ENCODE measurements at regions of chr1 and their contacts with region 1.

Region 1: GRCh38 chr1:115052454-115053083 is 22.9 kb downstream of the TSHB start:
- DNase-seq: peak; percentile 44 to 67 (median 61)
- H3K4me3 ChIP-seq: no peak overlapping the region
- H3K4me3 Mint-ChIP-seq: no peak overlapping the region
- H3K27ac ChIP-seq: no peak overlapping the region
- H3K27ac Mint-ChIP-seq: no peak overlapping the region
- H3K4me1 ChIP-seq: peaks cover 5% of the 10 kb centered on the region
- H3K4me1 Mint-ChIP-seq: peaks cover 0 to 5% (median 2%) of the 10 kb centered on the region in 4 donors
- H3K27me3 ChIP-seq: no peaks in the 10 kb centered on the region
- H3K27me3 Mint-ChIP-seq: no peaks in the 10 kb centered on the region

Region 2: GRCh38 chr1:115041654-115042053 is 10.9 kb before region 1 on chr1:
- CTCF ChIA-PET with region 1: interaction called, 49 read pairs
- POLR2A ChIA-PET with region 1: no interaction called
- intact Hi-C with region 1: no loop called
- DNase-seq: no peak
- H3K4me3 ChIP-seq: no peak overlapping the region
- H3K4me3 Mint-ChIP-seq: no peak overlapping the region
- H3K27ac ChIP-seq: no peak overlapping the region
- H3K27ac Mint-ChIP-seq: no peak overlapping the region
- H3K4me1 ChIP-seq: no peaks in the 10 kb centered on the region
- H3K4me1 Mint-ChIP-seq: no peaks in the 10 kb centered on the region
- H3K27me3 ChIP-seq: no peaks in the 10 kb centered on the region
- H3K27me3 Mint-ChIP-seq: no peaks in the 10 kb centered on the region

Region 3: GRCh38 chr1:115068826-115069572 is 16.4 kb after region 1 on chr1:
- CTCF ChIA-PET with region 1: interaction called, 14 read pairs
- POLR2A ChIA-PET with region 1: no interaction called
- intact Hi-C with region 1: no loop called
- DNase-seq: no peak
- H3K4me3 ChIP-seq: no peak overlapping the region
- H3K4me3 Mint-ChIP-seq: no peak overlapping the region
- H3K27ac ChIP-seq: no peak overlapping the region
- H3K27ac Mint-ChIP-seq: peak overlapping the region in 6 of 7 donors; percentile 13 to 70 (median 45)
- H3K4me1 ChIP-seq: peaks cover 45% of the 10 kb centered on the region
- H3K4me1 Mint-ChIP-seq: peaks cover 42 to 69% (median 50%) of the 10 kb centered on the region in 4 donors
- H3K27me3 ChIP-seq: no peaks in the 10 kb centered on the region
- H3K27me3 Mint-ChIP-seq: no peaks in the 10 kb centered on the region

Region 4: GRCh38 chr1:115089420-115090185 is 37.0 kb after region 1 on chr1 and contains the start of gene TSPAN2:
- CTCF ChIA-PET with region 1: interaction called, 12 read pairs
- POLR2A ChIA-PET with region 1: interaction called, 3 read pairs
- intact Hi-C with region 1: no loop called
- DNase-seq: peak; percentile 61 to 69 (median 64)
- H3K4me3 ChIP-seq: peak within 1 kb of the TSS; percentile 36 to 63
- H3K4me3 Mint-ChIP-seq: peak within 1 kb of the TSS; percentile 84 to 91 (median 87)
- H3K27ac ChIP-seq: peak within 1 kb of the TSS; percentile 61
- H3K27ac Mint-ChIP-seq: peak within 1 kb of the TSS; percentile 74 to 93 (median 90)
- H3K4me1 ChIP-seq: peaks cover 35% of the 10 kb centered on the region
- H3K4me1 Mint-ChIP-seq: peaks cover 35 to 60% (median 47%) of the 10 kb centered on the region in 4 donors
- H3K27me3 ChIP-seq: no peaks in the 10 kb centered on the region
- H3K27me3 Mint-ChIP-seq: no peaks in the 10 kb centered on the region
- total RNA-seq, gene TSPAN2: 1.3 to 3.5 TPM

Region 5: DNA sequence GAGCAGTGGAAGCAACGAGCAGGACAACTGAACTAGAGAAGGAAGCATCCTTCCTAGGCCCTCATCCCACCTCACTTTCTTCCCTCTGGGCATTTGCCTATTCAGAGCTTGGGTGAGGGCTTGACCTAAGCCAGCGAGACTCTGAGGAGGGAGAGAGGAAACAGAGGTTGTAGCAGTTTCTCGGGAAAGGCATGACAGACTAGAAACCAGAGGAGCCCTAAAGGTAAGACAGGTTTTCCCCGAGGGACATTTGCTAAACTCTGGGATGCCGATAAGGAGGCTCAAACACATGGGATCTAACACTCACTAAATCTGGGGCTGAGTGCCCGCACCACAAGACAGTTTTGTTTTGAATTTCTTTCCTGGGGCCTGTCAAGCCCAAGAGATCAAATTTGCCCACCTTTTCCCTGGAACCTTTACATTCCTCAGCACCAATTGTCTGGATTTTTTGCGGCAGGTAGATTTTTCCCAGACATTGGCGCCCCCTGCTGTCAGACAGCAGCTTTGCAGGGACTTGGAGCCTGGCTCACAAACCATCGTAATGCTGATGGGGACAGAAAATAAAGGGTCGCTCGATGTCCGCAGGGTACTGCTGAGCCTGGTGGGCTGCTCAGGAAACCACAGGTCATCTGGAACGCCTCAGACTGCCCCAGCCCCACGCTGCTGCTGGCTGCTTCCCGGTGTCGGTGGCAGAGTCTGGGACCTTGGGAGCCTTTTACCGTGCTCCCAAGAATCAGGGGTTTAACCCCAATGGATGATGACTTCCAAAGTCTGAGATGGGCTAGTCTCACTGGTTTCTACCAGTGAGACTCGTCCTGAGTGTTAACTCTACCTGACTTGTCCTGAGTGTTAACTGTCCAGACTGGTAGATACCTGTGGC is 60.2 kb after region 1 on chr1:
- CTCF ChIA-PET with region 1: interaction called, 49 read pairs
- POLR2A ChIA-PET with region 1: no interaction called
- intact Hi-C with region 1: no loop called
- DNase-seq: peak in 4 of 5 donors; percentile 39 to 60 (median 46)
- H3K4me3 ChIP-seq: no peak overlapping the region
- H3K4me3 Mint-ChIP-seq: no peak overlapping the region
- H3K27ac ChIP-seq: no peak overlapping the region
- H3K27ac Mint-ChIP-seq: peak overlapping the region in 6 of 7 donors; percentile 12 to 69 (median 46)
- H3K4me1 ChIP-seq: peaks cover 18% of the 10 kb centered on the region
- H3K4me1 Mint-ChIP-seq: peaks cover 9 to 25% (median 18%) of the 10 kb centered on the region in 4 donors
- H3K27me3 ChIP-seq: no peaks in the 10 kb centered on the region
- H3K27me3 Mint-ChIP-seq: no peaks in the 10 kb centered on the region